ENCODE measurements at regions of chr18 and their contacts with region 1.

Region 1: GRCh38 chr18:55322178-55322735 is 265.7 kb downstream of the TCF4 start:
- DNase-seq: peak; percentile 81
- ATAC-seq: peak; percentile 67
- H3K4me3 ChIP-seq: peak overlapping the region; percentile 73
- H3K27ac ChIP-seq: peak overlapping the region; percentile 8
- H3K4me1 ChIP-seq: peaks cover 4% of the 10 kb centered on the region; the same call in 1 of the 2 replicates
- H3K27me3 ChIP-seq: no peaks in the 10 kb centered on the region
- CTCF ChIP-seq: no peak; the same call in 1 of the 2 replicates

Region 2: GRCh38 chr18:55001394-55002024 is 320.7 kb before region 1 on chr18:
- CTCF ChIA-PET with region 1: no interaction called
- POLR2A ChIA-PET with region 1: no interaction called
- intact Hi-C with region 1: loop called (anchors 5 kb)
- DNase-seq: peak; percentile 78
- ATAC-seq: peak; percentile 77
- H3K4me3 ChIP-seq: no peak overlapping the region
- H3K27ac ChIP-seq: peak overlapping the region; percentile 49
- H3K4me1 ChIP-seq: peaks cover 21% of the 10 kb centered on the region
- H3K27me3 ChIP-seq: no peaks in the 10 kb centered on the region
- CTCF ChIP-seq: no peak

Region 3: DNA sequence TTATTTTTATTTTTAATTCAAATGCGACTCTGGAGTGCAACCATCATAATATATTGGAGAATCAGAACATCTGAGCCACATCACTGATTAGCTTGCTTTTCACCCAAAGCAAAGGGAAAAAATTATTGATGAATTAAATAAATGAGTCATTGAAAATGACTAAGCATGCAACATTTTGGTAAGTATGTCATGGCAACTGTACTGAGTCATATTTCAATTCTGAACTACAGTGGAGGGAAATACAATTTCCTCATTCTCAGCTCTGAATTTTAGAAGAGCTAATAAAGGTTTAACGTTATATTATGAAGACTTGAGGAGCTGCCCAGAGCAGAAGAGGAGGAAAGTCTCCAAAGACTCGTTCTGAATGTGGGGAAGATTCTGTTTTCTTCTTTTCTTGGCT is 273.4 kb before region 1 on chr18:
- CTCF ChIA-PET with region 1: no interaction called
- POLR2A ChIA-PET with region 1: no interaction called
- intact Hi-C with region 1: no loop called
- DNase-seq: peak; percentile 79
- ATAC-seq: peak; percentile 91
- H3K4me3 ChIP-seq: no peak overlapping the region
- H3K27ac ChIP-seq: peak overlapping the region; percentile 35
- H3K4me1 ChIP-seq: peaks cover 12% of the 10 kb centered on the region
- H3K27me3 ChIP-seq: no peaks in the 10 kb centered on the region
- CTCF ChIP-seq: no peak

Region 4: DNA sequence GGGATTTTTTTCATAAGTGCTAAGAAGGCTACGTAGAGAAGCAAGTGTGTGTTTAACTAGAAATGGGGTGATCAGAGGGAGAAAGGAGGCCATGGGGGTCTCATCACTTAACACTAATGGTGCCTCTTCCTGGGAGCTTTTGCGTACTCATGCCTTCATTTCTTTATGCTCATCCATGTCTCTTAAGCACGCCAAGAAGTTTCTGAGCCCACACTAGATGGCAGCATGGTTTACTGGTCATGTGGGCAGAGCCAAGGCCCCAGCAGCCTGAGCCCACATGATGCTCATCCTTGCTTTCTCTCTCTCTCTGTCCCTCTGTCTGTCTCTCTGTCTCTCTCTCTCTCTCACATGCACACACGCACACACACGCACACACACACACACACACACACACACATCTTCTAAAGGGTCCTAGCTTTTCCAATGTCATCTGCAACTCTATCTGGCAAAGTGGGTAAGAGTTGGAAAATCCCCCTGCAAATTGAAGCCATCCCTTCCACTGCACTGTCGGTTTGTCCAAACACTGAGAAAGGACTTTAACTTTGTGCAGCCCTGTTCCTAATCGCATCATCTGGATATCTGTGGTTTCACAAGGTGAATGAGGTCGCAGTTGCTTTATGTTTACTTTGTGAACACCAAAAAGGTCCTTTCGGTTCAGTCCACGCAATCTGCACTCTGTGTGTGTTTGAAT is 225.9 kb before region 1 on chr18:
- CTCF ChIA-PET with region 1: no interaction called
- POLR2A ChIA-PET with region 1: no interaction called
- intact Hi-C with region 1: loop called (anchors 10 kb)
- DNase-seq: peak; percentile 72
- ATAC-seq: peak; percentile 83
- H3K4me3 ChIP-seq: no peak overlapping the region
- H3K27ac ChIP-seq: no peak overlapping the region
- H3K4me1 ChIP-seq: peaks cover 15% of the 10 kb centered on the region
- H3K27me3 ChIP-seq: no peaks in the 10 kb centered on the region
- CTCF ChIP-seq: peak; percentile 68

Region 5: GRCh38 chr18:55113800-55114199 is 208.5 kb before region 1 on chr18:
- CTCF ChIA-PET with region 1: interaction called, 10 read pairs
- POLR2A ChIA-PET with region 1: no interaction called
- intact Hi-C with region 1: no loop called
- DNase-seq: no peak
- ATAC-seq: no peak
- H3K4me3 ChIP-seq: no peak overlapping the region
- H3K27ac ChIP-seq: no peak overlapping the region
- H3K4me1 ChIP-seq: no peaks in the 10 kb centered on the region
- H3K27me3 ChIP-seq: no peaks in the 10 kb centered on the region
- CTCF ChIP-seq: no peak

Region 6: DNA sequence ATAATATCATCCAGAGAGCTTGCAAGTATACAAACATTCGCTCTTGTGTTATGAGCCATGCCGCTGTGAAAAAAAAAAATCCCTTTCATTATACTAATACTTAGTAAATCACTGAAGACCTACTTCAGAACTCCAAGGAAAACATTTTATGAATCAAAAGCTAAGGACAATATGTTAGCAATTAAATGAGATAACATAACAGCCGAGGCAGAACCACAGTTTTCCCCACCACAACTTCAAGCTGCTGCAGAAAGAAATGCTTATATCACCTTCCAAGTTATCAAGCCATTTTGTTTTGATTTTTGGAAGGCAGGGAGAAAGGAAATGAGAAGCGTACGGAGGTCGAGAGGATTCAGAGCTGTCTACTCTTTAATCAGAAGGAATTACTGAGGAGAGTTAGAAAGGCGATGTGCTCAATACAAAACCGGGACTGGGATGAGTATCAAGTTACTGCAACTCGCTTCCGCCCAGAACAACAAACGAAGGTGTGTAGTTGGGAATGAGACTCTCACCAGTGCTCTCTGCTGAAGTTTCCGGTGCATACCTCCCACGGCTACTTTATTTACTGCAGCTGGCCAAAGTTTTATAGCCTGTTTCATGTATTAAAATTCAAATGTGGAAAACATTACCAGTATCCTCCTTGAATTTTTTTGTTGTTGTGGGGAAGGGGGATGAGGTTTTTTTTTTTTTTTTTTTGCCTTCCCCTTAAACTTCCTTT is 70.8 kb before region 1 on chr18:
- CTCF ChIA-PET with region 1: interaction called, 9 read pairs
- POLR2A ChIA-PET with region 1: no interaction called
- intact Hi-C with region 1: loop called (anchors 1 kb)
- DNase-seq: peak; percentile 82
- ATAC-seq: peak; percentile 87
- H3K4me3 ChIP-seq: peak overlapping the region; percentile 56
- H3K27ac ChIP-seq: peak overlapping the region; percentile 86
- H3K4me1 ChIP-seq: peaks cover 47% of the 10 kb centered on the region
- H3K27me3 ChIP-seq: no peaks in the 10 kb centered on the region
- CTCF ChIP-seq: no peak

Region 7: DNA sequence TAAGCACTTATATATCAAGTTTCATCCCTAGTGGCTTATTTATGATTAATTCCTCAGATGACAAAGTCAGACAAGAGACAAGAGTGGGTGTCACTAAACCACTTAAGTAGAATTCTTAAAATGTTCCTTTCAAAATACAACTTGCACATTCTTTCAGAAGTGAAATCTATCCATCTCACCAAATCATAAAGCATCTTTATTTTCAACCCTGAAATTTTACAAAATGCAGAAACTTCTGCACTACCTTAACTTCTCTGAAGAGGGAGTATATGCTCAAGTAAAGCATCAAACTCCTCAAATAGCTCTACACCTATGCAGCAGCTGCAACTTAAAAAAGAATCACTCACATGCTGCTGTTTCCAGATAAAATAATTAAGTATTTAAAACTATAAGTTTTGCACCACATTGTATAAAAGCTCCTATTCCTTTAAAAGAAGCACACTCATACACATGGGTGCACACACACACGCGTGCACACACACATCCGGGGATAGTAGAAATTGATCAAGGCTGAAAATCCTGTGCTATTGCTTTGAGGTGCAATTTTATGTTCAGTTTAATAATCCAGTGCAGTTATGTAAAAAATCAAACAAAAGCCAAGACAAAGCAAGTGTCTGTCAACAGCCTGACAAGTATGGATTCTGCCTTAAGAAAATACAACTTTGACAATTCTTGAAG is 21.3 kb after region 1 on chr18:
- CTCF ChIA-PET with region 1: no interaction called
- POLR2A ChIA-PET with region 1: no interaction called
- intact Hi-C with region 1: no loop called
- DNase-seq: peak; percentile 46
- ATAC-seq: peak; percentile 37; the same call in 1 of the 2 replicates
- H3K4me3 ChIP-seq: no peak overlapping the region
- H3K27ac ChIP-seq: no peak overlapping the region
- H3K4me1 ChIP-seq: no peaks in the 10 kb centered on the region
- H3K27me3 ChIP-seq: no peaks in the 10 kb centered on the region
- CTCF ChIP-seq: peak; percentile 69